ENCODE measurements at regions of chr4 and their contacts with region 1.

Region 1: DNA sequence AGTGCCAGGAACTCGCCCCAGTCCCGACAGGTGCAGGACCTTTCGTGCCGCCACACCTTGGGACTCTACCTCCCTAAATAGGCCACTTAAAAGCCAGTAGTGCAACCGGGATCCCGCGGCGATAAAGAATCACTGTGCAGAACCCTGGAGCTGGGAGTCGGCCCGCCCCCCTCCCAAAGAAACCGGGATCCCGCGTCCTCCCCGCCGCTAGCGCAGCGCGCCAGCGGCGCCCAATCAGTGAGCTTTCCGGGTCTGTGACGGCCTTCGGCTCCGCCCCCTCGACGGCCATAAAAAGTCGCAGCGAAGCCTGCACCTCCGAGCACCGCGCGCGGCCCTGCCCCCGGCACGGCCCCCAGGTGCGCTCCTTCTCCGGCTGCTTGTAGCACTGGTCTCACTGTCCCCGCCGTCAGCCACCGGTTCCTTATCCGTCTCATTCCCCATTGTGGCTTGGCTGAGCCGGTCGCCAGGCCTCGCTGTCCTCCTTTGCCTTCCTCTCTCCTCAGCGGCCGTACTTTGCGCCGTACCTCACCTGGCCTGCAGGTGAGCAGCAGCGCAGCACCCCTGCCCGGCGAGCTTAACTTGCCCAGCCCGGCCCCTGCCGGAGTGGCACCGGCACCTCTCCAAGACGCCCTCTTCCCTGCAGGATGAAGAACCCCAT is at the start of gene LRAT:
- DNase-seq: peak; percentile 54
- ATAC-seq: peak; percentile 98
- H3K4me3 ChIP-seq: peak within 1 kb of the TSS; percentile 65 to 68
- H3K27ac ChIP-seq: no peak within 1 kb of the TSS; the same call in 1 of the 2 replicates
- H3K4me1 ChIP-seq: peaks cover 3 to 14% of the 10 kb centered on the region in 2 experiments; a peak in 3 of 4 replicates
- H3K27me3 ChIP-seq: no peaks in the 10 kb centered on the region
- CTCF ChIP-seq: peak in 2 of 3 experiments; percentile 43 to 48; a peak in 4 of 6 replicates
- POLR2A ChIP-seq: no peak
- RAD21 ChIP-seq: no peak
- total RNA-seq, gene LRAT: 3.8 TPM

Region 2: DNA sequence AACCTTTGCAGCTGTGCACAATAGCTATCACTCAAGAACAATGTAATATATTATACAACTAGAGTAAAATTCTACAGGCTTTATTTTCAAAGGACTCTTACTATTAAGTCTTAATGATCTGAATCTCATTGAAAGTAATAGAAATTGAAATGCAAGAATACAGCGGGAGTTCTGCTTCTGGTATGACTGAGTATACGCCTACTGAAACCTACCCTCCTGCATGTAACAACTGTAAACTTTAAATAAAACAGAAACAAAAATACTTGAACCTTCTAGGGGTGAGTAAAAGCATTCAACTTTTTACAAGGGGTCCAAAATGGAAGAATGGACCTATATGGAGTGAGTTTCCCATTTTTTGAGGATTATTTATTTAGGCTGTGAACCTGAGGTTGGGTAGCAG is 265.7 kb before region 1 on chr4:
- CTCF ChIA-PET with region 1: no interaction called
- POLR2A ChIA-PET with region 1: no interaction called
- RAD21 ChIA-PET with region 1: no interaction called
- intact Hi-C with region 1: no loop called
- DNase-seq: no peak
- ATAC-seq: no peak
- H3K4me3 ChIP-seq: no peak overlapping the region
- H3K27ac ChIP-seq: no peak overlapping the region
- H3K4me1 ChIP-seq: no peaks in the 10 kb centered on the region
- H3K27me3 ChIP-seq: no peaks in the 10 kb centered on the region
- CTCF ChIP-seq: no peak
- POLR2A ChIP-seq: no peak
- RAD21 ChIP-seq: no peak

Region 3: DNA sequence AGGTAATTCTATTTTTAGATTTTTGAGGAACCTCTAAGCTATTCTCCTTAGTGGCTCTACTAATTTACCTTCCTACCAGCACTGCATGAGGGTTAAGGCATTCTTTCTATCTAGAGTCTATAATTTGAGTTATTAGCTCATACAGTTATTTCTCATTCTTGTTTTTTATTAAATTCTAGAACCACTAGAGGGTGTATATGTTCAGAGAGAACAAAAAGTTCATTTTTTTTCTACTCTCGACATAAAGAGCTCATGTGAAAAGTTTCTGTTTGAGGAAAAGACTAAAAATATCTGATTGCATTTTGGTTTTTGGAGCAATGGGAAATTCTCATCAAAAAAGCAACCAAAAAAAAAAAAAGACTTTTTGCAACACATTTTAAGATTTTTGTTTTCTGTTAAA is 57.0 kb before region 1 on chr4:
- CTCF ChIA-PET with region 1: interaction called, 10 read pairs
- POLR2A ChIA-PET with region 1: interaction called, 3 read pairs
- RAD21 ChIA-PET with region 1: no interaction called
- intact Hi-C with region 1: no loop called
- DNase-seq: no peak
- ATAC-seq: no peak
- H3K4me3 ChIP-seq: no peak overlapping the region
- H3K27ac ChIP-seq: no peak overlapping the region
- H3K4me1 ChIP-seq: no peaks in the 10 kb centered on the region
- H3K27me3 ChIP-seq: no peaks in the 10 kb centered on the region
- CTCF ChIP-seq: peak; percentile 7 to 46 (median 26); a peak in 3 of 6 replicates
- POLR2A ChIP-seq: no peak
- RAD21 ChIP-seq: peak; percentile 46

Region 4: DNA sequence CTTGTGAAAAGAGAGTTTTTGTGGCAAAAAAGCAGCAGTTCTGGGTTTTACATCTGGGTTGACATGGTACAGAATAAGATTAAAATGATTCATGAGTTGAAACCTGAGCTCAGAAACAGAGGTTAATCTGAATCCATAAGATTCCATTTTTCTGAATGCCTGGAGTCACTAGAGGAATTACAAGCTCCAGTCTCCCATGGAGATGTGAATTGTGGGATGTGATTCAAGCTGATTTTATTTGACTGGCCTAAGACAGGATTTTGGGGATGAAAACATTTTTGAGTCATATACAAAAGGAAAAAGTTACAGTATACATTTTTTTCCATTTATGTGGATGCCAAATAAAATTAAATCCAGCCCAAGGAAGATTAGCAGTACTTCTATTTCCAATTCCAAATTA is 198.4 kb after region 1 on chr4:
- CTCF ChIA-PET with region 1: no interaction called
- POLR2A ChIA-PET with region 1: no interaction called
- RAD21 ChIA-PET with region 1: no interaction called
- intact Hi-C with region 1: no loop called
- DNase-seq: no peak
- ATAC-seq: no peak
- H3K4me3 ChIP-seq: no peak overlapping the region
- H3K27ac ChIP-seq: no peak overlapping the region
- H3K4me1 ChIP-seq: no peaks in the 10 kb centered on the region
- H3K27me3 ChIP-seq: no peaks in the 10 kb centered on the region
- CTCF ChIP-seq: no peak
- POLR2A ChIP-seq: no peak
- RAD21 ChIP-seq: no peak

Region 5: DNA sequence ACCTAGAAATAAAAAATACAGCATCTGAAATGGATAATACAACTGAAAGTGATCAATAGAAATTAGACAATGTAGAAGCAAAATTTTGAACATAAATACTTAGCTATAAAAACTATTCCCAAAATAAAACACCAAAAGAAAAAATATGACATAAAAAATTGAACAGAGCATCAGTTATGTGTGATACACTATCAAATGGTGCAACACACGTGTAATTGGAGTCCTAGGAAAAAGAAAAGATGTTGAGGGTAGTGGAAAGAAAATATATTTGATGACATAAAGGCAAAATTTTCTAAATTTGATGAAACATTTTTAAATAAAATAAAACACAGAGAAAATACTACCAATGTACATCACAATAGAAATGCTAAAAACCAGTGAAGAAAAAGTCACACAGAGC is 527.7 kb after region 1 on chr4:
- CTCF ChIA-PET with region 1: no interaction called
- POLR2A ChIA-PET with region 1: no interaction called
- RAD21 ChIA-PET with region 1: no interaction called
- intact Hi-C with region 1: no loop called
- DNase-seq: peak; percentile 18
- ATAC-seq: no peak
- H3K4me3 ChIP-seq: no peak overlapping the region
- H3K27ac ChIP-seq: no peak overlapping the region
- H3K4me1 ChIP-seq: no peaks in the 10 kb centered on the region
- H3K27me3 ChIP-seq: no peaks in the 10 kb centered on the region
- CTCF ChIP-seq: no peak
- POLR2A ChIP-seq: no peak
- RAD21 ChIP-seq: no peak

Measured in HCT116 (cell line).